WTC11 (cell line): ENCODE measurements at regions of chr1 and their contacts with region 1.

Region 1: DNA sequence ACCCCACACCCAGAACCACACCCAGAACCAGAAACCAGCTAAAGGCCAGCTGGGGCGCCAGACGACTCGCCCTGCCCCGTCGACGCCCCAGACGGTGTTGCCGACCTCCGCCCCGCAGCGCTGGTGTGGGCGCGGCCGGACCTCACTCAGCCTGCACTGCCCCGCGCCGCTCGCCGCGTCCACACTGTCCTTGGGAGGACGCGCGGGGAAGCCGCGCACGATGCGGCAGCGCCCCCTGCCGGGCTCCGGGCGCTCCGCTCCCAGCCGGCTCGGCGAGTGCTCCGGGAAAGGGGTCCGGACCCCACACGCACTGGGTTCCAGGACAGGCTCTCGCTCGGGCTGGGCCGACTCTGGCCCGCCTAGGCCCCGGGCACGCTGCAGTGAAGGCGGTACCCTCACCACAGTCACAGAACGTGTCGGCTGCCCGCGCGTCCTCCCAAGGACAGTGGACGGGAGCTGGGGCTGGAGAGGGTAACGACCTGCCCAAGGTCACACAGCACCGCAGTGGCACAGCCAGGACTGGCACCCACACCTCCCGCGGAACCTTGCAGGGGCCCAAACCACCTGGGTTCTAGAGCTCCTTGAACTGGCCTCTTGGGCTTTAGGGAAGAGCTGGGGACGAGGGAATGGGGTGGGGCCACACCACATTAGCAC is 90.2 kb downstream of the DMRTA2 start:
- DNase-seq: peak; percentile 83
- ATAC-seq: peak; percentile 90
- H3K4me3 Mint-ChIP-seq: peak overlapping the region; percentile 63
- H3K27ac Mint-ChIP-seq: no peak overlapping the region
- H3K4me1 Mint-ChIP-seq: peaks cover 12% of the 10 kb centered on the region
- H3K27me3 Mint-ChIP-seq: peaks cover 55% of the 10 kb centered on the region
- CTCF ChIP-seq: peak; percentile 77

Region 2: GRCh38 chr1:50172299-50172698 is 160.8 kb before region 1 on chr1:
- CTCF ChIA-PET with region 1: no interaction called
- POLR2A ChIA-PET with region 1: no interaction called
- DNase-seq: no peak
- ATAC-seq: no peak
- H3K4me3 Mint-ChIP-seq: no peak overlapping the region
- H3K27ac Mint-ChIP-seq: no peak overlapping the region
- H3K4me1 Mint-ChIP-seq: peaks cover 11% of the 10 kb centered on the region
- H3K27me3 Mint-ChIP-seq: 0 out of 2 replicates have a peak, but pooled peaks cover 2% of the 10 kb centered on the region
- CTCF ChIP-seq: no peak

Region 3: GRCh38 chr1:50271968-50272578 is 61.0 kb before region 1 on chr1:
- CTCF ChIA-PET with region 1: interaction called, 14 read pairs
- POLR2A ChIA-PET with region 1: no interaction called
- DNase-seq: peak; percentile 68
- ATAC-seq: peak; percentile 74
- H3K4me3 Mint-ChIP-seq: no peak overlapping the region
- H3K27ac Mint-ChIP-seq: no peak overlapping the region
- H3K4me1 Mint-ChIP-seq: peaks cover 38% of the 10 kb centered on the region
- H3K27me3 Mint-ChIP-seq: peaks cover 29% of the 10 kb centered on the region
- CTCF ChIP-seq: peak; percentile 61; the same call in 1 of the 2 replicates

Region 4: DNA sequence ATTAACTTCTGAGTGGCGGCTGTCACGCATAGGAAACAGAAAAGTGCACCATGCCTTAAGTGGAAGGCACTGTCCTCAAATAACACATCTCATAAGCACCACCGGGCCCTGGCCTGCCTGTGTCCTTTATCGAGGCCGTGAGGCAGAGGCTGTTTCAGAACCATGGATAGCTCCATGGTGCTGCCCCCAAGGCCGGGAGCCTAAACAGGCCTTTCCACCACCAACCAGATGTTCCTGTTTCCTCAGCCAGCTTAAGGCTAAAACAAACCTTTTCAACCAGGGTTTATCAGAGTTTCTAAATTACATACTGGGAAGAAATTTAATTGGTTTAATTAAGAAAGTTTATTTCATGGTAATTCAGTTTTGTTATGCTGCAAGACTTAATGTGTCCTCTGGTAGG is 24.2 kb before region 1 on chr1:
- CTCF ChIA-PET with region 1: interaction called, 14 read pairs
- POLR2A ChIA-PET with region 1: no interaction called
- DNase-seq: peak; percentile 79
- ATAC-seq: peak; percentile 95
- H3K4me3 Mint-ChIP-seq: no peak overlapping the region
- H3K27ac Mint-ChIP-seq: no peak overlapping the region
- H3K4me1 Mint-ChIP-seq: peaks cover 15% of the 10 kb centered on the region
- H3K27me3 Mint-ChIP-seq: no peaks in the 10 kb centered on the region; the same call in none of the 2 replicates
- CTCF ChIP-seq: no peak